PC-9 (cell line): ENCODE measurements at regions of chr20 and their contacts with region 1.

Region 1: DNA sequence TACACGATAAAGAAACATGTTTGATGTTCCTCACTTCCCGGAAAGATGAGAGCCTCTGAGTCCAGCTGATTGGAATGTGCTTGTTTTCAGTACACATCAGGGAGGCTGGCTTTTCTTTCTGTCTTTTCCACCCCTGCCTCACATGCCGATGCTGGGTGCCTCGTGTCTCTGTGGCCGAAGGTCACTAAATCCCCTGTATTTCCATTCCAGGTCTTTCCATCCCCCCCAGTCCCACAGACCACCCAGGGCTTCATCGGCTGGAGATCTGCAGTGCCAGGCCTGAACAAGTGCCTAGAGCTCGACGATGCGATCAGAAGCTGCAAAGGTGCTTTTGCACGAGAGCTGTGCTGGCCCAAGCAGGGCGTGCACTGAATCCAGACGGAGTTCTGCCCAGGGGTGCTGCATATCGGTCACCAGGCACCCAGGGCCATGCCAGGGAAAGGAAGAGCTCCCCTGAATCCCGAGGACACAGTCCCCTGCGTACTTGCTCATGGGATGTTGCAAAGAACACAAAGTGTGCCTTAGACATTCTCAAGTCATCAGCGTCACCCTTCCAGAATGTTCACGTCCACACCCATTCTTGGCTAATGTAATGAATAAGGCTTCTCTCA is 67.9 kb downstream of the ANKRD60 start:
- DNase-seq: no peak
- H3K4me3 ChIP-seq: no peak overlapping the region
- H3K27ac ChIP-seq: no peak overlapping the region
- H3K4me1 ChIP-seq: no peaks in the 10 kb centered on the region
- H3K27me3 ChIP-seq: no peaks in the 10 kb centered on the region
- CTCF ChIP-seq: no peak

Region 2: GRCh38 chr20:58196008-58196820 is 35.7 kb after region 1 on chr20:
- CTCF ChIA-PET with region 1: interaction called, 13 read pairs
- POLR2A ChIA-PET with region 1: no interaction called
- intact Hi-C with region 1: no loop called
- DNase-seq: no peak
- H3K4me3 ChIP-seq: no peak overlapping the region
- H3K27ac ChIP-seq: no peak overlapping the region
- H3K4me1 ChIP-seq: no peaks in the 10 kb centered on the region
- H3K27me3 ChIP-seq: no peaks in the 10 kb centered on the region
- CTCF ChIP-seq: no peak